Esophagus muscularis mucosa (tissue), 4 donors: ENCODE measurements at regions of chr7 and their contacts with region 1.

Region 1: GRCh38 chr7:40780460-40780859 is 645.7 kb downstream of the SUGCT start:
- DNase-seq: no peak
- H3K4me3 ChIP-seq: no peak overlapping the region
- H3K27ac ChIP-seq: peak overlapping the region; percentile 62 to 69 (median 67)
- H3K4me1 ChIP-seq: peaks cover 14 to 66% (median 59%) of the 10 kb centered on the region in 4 donors
- H3K27me3 ChIP-seq: no peaks in the 10 kb centered on the region
- CTCF ChIP-seq: no peak
- EP300 ChIP-seq: no peak
- POLR2A ChIP-seq: no peak

Region 2: GRCh38 chr7:40918701-40919271 is 138.3 kb after region 1 on chr7:
- intact Hi-C with region 1: loop called (anchors 10 kb)
- DNase-seq: no peak
- H3K4me3 ChIP-seq: no peak overlapping the region
- H3K27ac ChIP-seq: peak overlapping the region; percentile 25 to 75 (median 50)
- H3K4me1 ChIP-seq: peaks cover 0 to 20% (median 13%) of the 10 kb centered on the region in 4 donors
- H3K27me3 ChIP-seq: no peaks in the 10 kb centered on the region
- CTCF ChIP-seq: no peak
- EP300 ChIP-seq: no peak
- POLR2A ChIP-seq: no peak